ENCODE measurements at regions of chr2 and their contacts with region 1.

Region 1: DNA sequence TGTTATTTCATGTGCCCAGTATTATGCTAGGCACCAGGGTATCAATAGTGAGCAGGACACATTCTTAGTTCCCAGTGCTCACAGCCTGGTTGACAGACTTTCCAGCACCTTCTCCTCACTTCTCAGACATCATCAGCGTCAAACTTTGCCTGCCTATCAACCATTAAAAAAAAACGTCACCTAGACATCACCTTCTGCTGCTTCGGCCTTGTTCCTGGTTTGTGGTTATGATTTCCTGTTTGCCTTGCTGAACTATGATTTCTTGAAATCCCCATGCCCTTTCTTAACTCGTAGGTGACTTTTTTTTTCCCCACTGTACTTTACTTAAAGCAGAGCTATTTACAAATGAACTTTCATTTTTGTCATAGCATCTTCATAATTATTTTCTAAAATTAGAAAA is 60.4 kb upstream of the NABP1 start:
- DNase-seq: no peak
- ATAC-seq: peak; percentile 89
- H3K4me3 Mint-ChIP-seq: peak overlapping the region; percentile 48
- H3K27ac Mint-ChIP-seq: peak overlapping the region; percentile 79
- H3K4me1 Mint-ChIP-seq: peaks cover 36% of the 10 kb centered on the region
- H3K27me3 Mint-ChIP-seq: no peaks in the 10 kb centered on the region

Region 2: GRCh38 chr2:191637182-191638078 is 19.9 kb after region 1 on chr2:
- POLR2A ChIA-PET with region 1: interaction called, 14 read pairs
- DNase-seq: no peak
- ATAC-seq: peak; percentile 84
- H3K4me3 Mint-ChIP-seq: peak overlapping the region; percentile 75
- H3K27ac Mint-ChIP-seq: peak overlapping the region; percentile 95
- H3K4me1 Mint-ChIP-seq: peaks cover 56% of the 10 kb centered on the region
- H3K27me3 Mint-ChIP-seq: no peaks in the 10 kb centered on the region

Region 3: GRCh38 chr2:191653667-191654394 is 36.3 kb after region 1 on chr2:
- POLR2A ChIA-PET with region 1: no interaction called
- DNase-seq: no peak
- ATAC-seq: no peak
- H3K4me3 Mint-ChIP-seq: no peak overlapping the region
- H3K27ac Mint-ChIP-seq: no peak overlapping the region
- H3K4me1 Mint-ChIP-seq: peaks cover 11% of the 10 kb centered on the region
- H3K27me3 Mint-ChIP-seq: no peaks in the 10 kb centered on the region

Measured in activated naive CD8-positive, alpha-beta T cell treated with anti-CD3 and anti-CD28 coated beads, Interleukin-2, amount 10 ng/mL, durations not matched to agents 7 days and 5 days (primary cell).